ENCODE measurements at regions of chr2 and their contacts with region 1.

Region 1: DNA sequence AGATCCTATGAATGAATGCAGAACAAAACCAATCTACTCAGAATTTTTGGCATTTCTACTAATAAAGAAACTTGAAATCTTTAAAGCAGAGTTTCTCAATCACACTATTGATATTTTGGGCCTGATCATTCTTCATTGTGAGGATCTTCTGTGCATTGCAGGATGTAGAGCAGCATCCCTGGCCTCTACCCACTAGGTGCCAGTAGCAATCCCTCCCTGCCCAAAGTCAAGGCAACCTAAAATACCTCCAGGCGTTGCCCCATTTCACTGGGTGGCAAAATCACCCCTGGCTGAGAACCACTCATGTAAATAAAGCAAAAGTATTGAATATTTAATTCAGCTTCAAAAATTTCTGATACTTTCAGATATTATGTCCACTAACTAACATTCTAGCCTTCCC is 213.0 kb downstream of the SP3 start:
- DNase-seq: peak; percentile 28
- H3K4me3 ChIP-seq: no peak overlapping the region
- H3K27ac ChIP-seq: no peak overlapping the region
- H3K4me1 ChIP-seq: peaks cover 11% of the 10 kb centered on the region
- H3K27me3 ChIP-seq: no peaks in the 10 kb centered on the region
- CTCF ChIP-seq: peak; percentile 44; the same call in 1 of the 2 replicates

Region 2: DNA sequence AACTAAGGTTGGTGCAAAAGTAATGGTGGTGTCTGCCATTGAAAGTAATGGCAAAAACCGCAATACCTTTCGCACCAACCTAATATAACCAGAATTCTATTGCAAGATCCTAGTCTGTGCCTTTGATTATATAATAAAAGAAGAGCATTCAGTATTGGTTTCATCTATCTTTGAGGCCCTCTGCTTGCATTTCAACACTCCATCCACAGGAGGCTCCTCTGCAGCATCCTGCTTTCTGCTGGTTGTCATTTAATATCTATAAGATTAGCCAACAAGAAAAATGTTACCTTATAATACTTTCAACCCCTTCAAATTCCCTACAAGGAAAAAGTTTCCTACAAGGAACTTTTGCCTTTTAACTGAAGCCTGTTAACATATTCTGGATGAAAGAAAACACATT is 258.3 kb before region 1 on chr2:
- CTCF ChIA-PET with region 1: no interaction called
- POLR2A ChIA-PET with region 1: no interaction called
- intact Hi-C with region 1: no loop called
- DNase-seq: no peak
- H3K4me3 ChIP-seq: no peak overlapping the region
- H3K27ac ChIP-seq: no peak overlapping the region
- H3K4me1 ChIP-seq: no peaks in the 10 kb centered on the region
- H3K27me3 ChIP-seq: no peaks in the 10 kb centered on the region
- CTCF ChIP-seq: 0 out of 2 replicates have a peak, but pooled peaks have one; percentile 15

Region 3: GRCh38 chr2:173965329-173966025 is 213.3 kb after region 1 on chr2 and contains the start of gene SP3:
- CTCF ChIA-PET with region 1: no interaction called
- POLR2A ChIA-PET with region 1: no interaction called
- intact Hi-C with region 1: loop called (anchors 5 kb)
- DNase-seq: peak; percentile 98
- H3K4me3 ChIP-seq: peak within 1 kb of the TSS; percentile 93
- H3K27ac ChIP-seq: peak within 1 kb of the TSS; percentile 99
- H3K4me1 ChIP-seq: peaks cover 7% of the 10 kb centered on the region
- H3K27me3 ChIP-seq: no peaks in the 10 kb centered on the region
- CTCF ChIP-seq: no peak
- total RNA-seq, gene SP3: 84.5 and 90.8 TPM in 2 replicates

Region 4: DNA sequence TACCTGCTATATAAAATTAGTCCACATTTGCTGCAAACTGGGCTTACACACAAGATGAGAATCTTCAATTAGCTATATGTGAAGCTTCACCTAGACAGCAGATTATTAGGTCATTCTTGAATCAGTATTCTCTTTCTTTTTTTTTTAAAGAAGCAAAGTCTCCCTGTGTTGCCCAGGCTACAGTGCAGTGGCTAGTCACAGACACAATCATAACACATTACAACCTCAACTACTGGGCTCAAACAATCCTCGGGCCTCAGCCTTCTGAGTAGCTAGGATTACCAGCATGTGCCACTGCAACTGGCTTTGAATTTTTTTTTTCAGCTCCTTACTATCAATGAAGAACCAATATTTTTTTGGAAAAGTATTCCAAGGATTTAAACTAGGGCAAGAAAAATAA is 465.7 kb after region 1 on chr2:
- CTCF ChIA-PET with region 1: no interaction called
- POLR2A ChIA-PET with region 1: no interaction called
- intact Hi-C with region 1: no loop called
- DNase-seq: no peak
- H3K4me3 ChIP-seq: no peak overlapping the region
- H3K27ac ChIP-seq: no peak overlapping the region
- H3K4me1 ChIP-seq: peaks cover 3% of the 10 kb centered on the region
- H3K27me3 ChIP-seq: no peaks in the 10 kb centered on the region
- CTCF ChIP-seq: no peak